HEK293T (cell line): ENCODE measurements at regions of chr19 and their contacts with region 1.

Region 1: GRCh38 chr19:1767464-1767933 is 14.2 kb downstream of the ONECUT3 start:
- DNase-seq: peak; percentile 84

Region 2: GRCh38 chr19:1672038-1672768 is 95.3 kb before region 1 on chr19:
- CTCF ChIA-PET with region 1: interaction called, 24 read pairs
- POLR2A ChIA-PET with region 1: interaction called, 3 read pairs
- DNase-seq: peak; percentile 69